ENCODE measurements at regions of chr6 and their contacts with region 1.

Region 1: DNA sequence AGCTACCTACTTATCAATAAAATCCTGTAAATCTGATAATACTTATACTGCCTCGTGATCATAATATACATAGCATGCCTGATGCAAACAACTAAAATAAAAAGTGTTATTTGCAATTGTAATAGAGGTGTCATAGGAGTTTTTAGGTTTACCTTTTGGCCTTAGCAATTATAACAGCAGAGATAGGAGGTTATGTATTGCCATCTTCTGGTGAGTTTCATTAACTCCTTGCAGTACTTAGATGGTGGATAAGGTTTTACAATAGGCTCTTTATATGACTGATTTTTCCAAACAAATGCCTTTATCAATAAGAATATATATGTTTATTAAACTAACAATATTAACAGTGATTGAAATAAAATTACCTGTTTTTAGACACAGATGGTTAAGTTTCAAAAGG is 27.8 kb upstream of the MYCT1 start:
- DNase-seq: no peak
- H3K4me3 ChIP-seq: no peak overlapping the region
- H3K27ac ChIP-seq: no peak overlapping the region
- H3K4me1 ChIP-seq: no peaks in the 10 kb centered on the region
- H3K27me3 ChIP-seq: no peaks in the 10 kb centered on the region
- CTCF ChIP-seq: peak; percentile 41 to 70 (median 54)
- POLR2A ChIP-seq: no peak

Region 2: GRCh38 chr6:152529369-152529768 is 140.5 kb before region 1 on chr6:
- intact Hi-C with region 1: no loop called
- DNase-seq: no peak
- H3K4me3 ChIP-seq: no peak overlapping the region
- H3K27ac ChIP-seq: no peak overlapping the region
- H3K4me1 ChIP-seq: no peaks in the 10 kb centered on the region
- H3K27me3 ChIP-seq: no peaks in the 10 kb centered on the region
- CTCF ChIP-seq: no peak
- POLR2A ChIP-seq: no peak

Region 3: DNA sequence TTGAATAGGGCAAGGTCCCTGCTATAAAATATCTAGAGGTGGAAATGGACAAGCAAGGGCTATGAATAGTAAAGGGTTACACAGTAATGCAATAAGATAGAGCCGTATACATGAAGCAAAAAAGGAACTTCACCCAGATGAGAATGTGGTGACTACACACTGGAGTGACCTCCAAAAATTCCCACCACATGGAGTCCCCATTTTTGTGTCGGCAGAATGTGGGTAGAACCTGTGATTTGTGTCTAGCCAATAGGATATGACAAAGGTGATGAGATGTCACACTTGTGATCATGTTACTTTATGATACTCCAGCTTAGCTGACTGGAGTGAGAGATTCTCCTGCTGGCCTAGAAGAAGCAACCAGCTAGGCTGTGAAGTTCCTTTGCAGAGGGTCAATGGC is 129.5 kb before region 1 on chr6:
- intact Hi-C with region 1: loop called (anchors 10 kb)
- DNase-seq: no peak
- H3K4me3 ChIP-seq: no peak overlapping the region
- H3K27ac ChIP-seq: no peak overlapping the region
- H3K4me1 ChIP-seq: no peaks in the 10 kb centered on the region
- H3K27me3 ChIP-seq: no peaks in the 10 kb centered on the region
- CTCF ChIP-seq: no peak
- POLR2A ChIP-seq: no peak

Measured in uterus (tissue), 4 donors.